ENCODE measurements at regions of chr5 and their contacts with region 1.

Region 1: GRCh38 chr5:98173334-98173733 is 600.1 kb upstream of the RGMB start:
- DNase-seq: no peak
- H3K4me3 ChIP-seq: no peak overlapping the region
- H3K27ac ChIP-seq: no peak overlapping the region
- H3K4me1 ChIP-seq: no peaks in the 10 kb centered on the region
- H3K27me3 ChIP-seq: no peaks in the 10 kb centered on the region
- CTCF ChIP-seq: no peak
- POLR2A ChIP-seq: no peak

Region 2: GRCh38 chr5:98050583-98050982 is 122.8 kb before region 1 on chr5:
- CTCF ChIA-PET with region 1: no interaction called
- POLR2A ChIA-PET with region 1: no interaction called
- dilution Hi-C with region 1: no loop called
- intact Hi-C with region 1: no loop called
- DNase-seq: no peak
- H3K4me3 ChIP-seq: no peak overlapping the region
- H3K27ac ChIP-seq: no peak overlapping the region
- H3K4me1 ChIP-seq: no peaks in the 10 kb centered on the region
- H3K27me3 ChIP-seq: no peaks in the 10 kb centered on the region
- CTCF ChIP-seq: no peak
- POLR2A ChIP-seq: no peak

Region 3: DNA sequence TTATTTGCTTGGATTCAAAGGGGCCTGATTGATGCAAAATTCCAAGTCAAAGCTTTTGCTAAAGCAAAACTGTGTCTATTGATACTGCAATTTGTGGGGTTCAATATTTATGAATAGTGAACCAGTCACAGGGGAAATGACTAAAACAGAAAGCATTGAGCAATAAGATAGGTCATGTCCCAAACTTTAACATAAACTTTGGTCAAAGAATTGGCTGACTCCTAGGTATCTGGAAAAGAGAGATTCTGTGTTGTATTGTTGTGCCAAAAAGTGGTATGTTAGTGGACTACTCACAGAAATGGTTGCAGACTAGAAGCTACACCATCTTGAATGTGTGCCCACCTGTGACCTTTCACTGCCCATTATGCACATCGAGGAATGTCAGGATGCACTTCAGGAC is 14.6 kb after region 1 on chr5:
- CTCF ChIA-PET with region 1: no interaction called
- POLR2A ChIA-PET with region 1: no interaction called
- dilution Hi-C with region 1: no loop called
- intact Hi-C with region 1: loop called (anchors 1 kb)
- DNase-seq: no peak
- H3K4me3 ChIP-seq: no peak overlapping the region
- H3K27ac ChIP-seq: no peak overlapping the region
- H3K4me1 ChIP-seq: no peaks in the 10 kb centered on the region
- H3K27me3 ChIP-seq: no peaks in the 10 kb centered on the region
- CTCF ChIP-seq: no peak
- POLR2A ChIP-seq: no peak

Region 4: GRCh38 chr5:98713027-98713426 is 539.7 kb after region 1 on chr5:
- CTCF ChIA-PET with region 1: no interaction called
- POLR2A ChIA-PET with region 1: no interaction called
- dilution Hi-C with region 1: no loop called
- intact Hi-C with region 1: no loop called
- DNase-seq: no peak
- H3K4me3 ChIP-seq: no peak overlapping the region
- H3K27ac ChIP-seq: no peak overlapping the region
- H3K4me1 ChIP-seq: no peaks in the 10 kb centered on the region
- H3K27me3 ChIP-seq: no peaks in the 10 kb centered on the region
- CTCF ChIP-seq: no peak
- POLR2A ChIP-seq: no peak

Measured in endothelial cell of umbilical vein (primary cell).